Prostate gland (tissue), 2 donors: ENCODE measurements at regions of chr6 and their contacts with region 1.

Region 1: DNA sequence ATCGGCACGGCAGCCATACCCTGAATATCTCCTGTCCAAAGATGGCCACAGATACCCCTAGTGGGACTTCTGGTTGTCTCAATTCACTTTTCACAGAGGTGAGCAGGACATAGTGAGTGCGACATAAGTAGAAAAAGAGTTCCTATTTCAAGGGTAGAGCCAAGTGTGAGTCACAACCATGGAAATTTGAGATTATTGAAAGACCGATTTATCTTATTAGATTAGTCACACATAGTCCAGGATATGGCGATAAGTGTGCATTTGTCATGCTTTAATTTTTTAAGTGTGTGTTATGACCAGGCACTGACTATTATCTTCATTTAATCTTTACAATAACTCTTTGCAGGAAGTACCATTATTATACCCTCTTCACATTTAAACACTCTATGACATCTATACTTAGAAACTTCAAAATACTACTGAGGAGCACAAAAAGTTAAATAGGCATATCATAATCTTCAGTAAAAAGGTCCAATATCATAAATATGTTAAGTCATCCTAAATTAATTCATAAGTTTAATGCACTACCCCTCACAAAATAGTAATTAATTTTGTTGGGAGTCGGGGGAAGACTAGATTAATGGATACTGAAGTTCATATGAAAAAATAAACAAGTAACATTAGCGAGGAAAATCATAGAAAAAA is 13.4 kb upstream of the TNFAIP3 start:
- DNase-seq: no peak
- H3K4me3 ChIP-seq: no peak overlapping the region
- H3K27ac ChIP-seq: no peak overlapping the region
- H3K4me1 ChIP-seq: no peaks in the 10 kb centered on the region
- H3K27me3 ChIP-seq: no peaks in the 10 kb centered on the region
- CTCF ChIP-seq: no peak
- POLR2A ChIP-seq: no peak

Region 2: GRCh38 chr6:137623293-137623692 is 230.4 kb before region 1 on chr6:
- intact Hi-C with region 1: no loop called
- DNase-seq: no peak
- H3K4me3 ChIP-seq: no peak overlapping the region
- H3K27ac ChIP-seq: no peak overlapping the region
- H3K4me1 ChIP-seq: no peaks in the 10 kb centered on the region
- H3K27me3 ChIP-seq: no peaks in the 10 kb centered on the region
- CTCF ChIP-seq: no peak
- POLR2A ChIP-seq: no peak

Region 3: DNA sequence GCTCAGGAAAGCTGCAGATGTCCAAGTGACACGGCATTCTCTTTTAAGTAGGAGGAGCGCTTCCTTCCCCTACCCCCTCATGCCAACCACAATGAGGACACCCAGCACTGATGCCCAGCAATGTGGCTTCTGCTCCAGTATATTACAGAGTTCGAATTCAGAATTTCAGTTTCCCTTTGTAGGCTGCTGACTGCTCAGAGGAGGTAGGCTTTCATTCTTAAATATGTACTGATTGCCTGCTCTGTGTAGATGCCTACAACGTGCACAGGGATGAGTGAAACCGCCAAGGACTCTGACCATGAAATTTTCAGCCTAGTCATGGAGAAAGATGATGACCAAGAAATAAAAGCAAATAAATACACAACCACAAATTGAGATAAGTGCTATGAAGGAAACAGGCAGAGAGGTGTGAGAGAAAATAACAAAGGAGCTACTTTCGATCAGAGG is 37.5 kb before region 1 on chr6:
- intact Hi-C with region 1: loop called (anchors 5 kb)
- DNase-seq: no peak
- H3K4me3 ChIP-seq: no peak overlapping the region
- H3K27ac ChIP-seq: no peak overlapping the region
- H3K4me1 ChIP-seq: no peaks in the 10 kb centered on the region
- H3K27me3 ChIP-seq: no peaks in the 10 kb centered on the region
- CTCF ChIP-seq: no peak
- POLR2A ChIP-seq: no peak

Region 4: GRCh38 chr6:137903933-137904821 is 50.5 kb after region 1 on chr6:
- intact Hi-C with region 1: no loop called
- DNase-seq: no peak
- H3K4me3 ChIP-seq: no peak overlapping the region
- H3K27ac ChIP-seq: no peak overlapping the region
- H3K4me1 ChIP-seq: no peaks in the 10 kb centered on the region
- H3K27me3 ChIP-seq: no peaks in the 10 kb centered on the region
- CTCF ChIP-seq: no peak
- POLR2A ChIP-seq: no peak